Breast epithelium (tissue), 4 donors: ENCODE measurements at regions of chr10 and their contacts with region 1.

Region 1: DNA sequence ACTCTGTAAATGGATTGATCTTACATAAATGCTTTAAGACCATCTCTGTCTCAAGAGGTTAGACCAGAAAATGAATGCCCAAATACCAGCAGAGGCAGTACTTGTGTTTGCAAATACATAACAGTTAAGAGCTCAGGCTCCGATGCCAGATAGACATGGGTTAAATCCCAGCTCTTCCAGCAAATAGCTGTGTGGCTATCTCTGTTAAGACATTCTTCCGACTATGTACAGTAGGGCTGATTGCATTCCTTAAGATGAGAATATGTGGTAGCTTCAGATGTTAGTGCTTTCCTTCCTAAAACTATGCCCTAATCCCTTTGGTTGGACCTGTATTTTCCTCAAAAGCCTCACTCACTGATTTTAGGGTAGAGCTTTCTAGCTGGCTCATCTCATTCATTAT is 2.2 kb downstream of the IDE start:
- DNase-seq: no peak
- H3K4me3 ChIP-seq: no peak overlapping the region
- H3K27ac ChIP-seq: no peak overlapping the region
- H3K4me1 ChIP-seq: no peaks in the 10 kb centered on the region
- H3K27me3 ChIP-seq: no peaks in the 10 kb centered on the region
- CTCF ChIP-seq: no peak
- POLR2A ChIP-seq: no peak

Region 2: GRCh38 chr10:91409869-91410637 is 1161.6 kb before region 1 on chr10 and contains the start of gene HECTD2:
- intact Hi-C with region 1: no loop called
- DNase-seq: peak; percentile 60 to 72
- H3K4me3 ChIP-seq: peak within 1 kb of the TSS; percentile 81 to 95 (median 88)
- H3K27ac ChIP-seq: peak within 1 kb of the TSS; percentile 100
- H3K4me1 ChIP-seq: peaks cover 0 to 3% of the 10 kb centered on the region in 2 donors
- H3K27me3 ChIP-seq: no peaks in the 10 kb centered on the region
- CTCF ChIP-seq: peak in 2 of 3 donors; percentile 7 to 75
- POLR2A ChIP-seq: no peak
- total RNA-seq, gene HECTD2: 14.2 to 30.7 (median 19.0) TPM

Region 3: DNA sequence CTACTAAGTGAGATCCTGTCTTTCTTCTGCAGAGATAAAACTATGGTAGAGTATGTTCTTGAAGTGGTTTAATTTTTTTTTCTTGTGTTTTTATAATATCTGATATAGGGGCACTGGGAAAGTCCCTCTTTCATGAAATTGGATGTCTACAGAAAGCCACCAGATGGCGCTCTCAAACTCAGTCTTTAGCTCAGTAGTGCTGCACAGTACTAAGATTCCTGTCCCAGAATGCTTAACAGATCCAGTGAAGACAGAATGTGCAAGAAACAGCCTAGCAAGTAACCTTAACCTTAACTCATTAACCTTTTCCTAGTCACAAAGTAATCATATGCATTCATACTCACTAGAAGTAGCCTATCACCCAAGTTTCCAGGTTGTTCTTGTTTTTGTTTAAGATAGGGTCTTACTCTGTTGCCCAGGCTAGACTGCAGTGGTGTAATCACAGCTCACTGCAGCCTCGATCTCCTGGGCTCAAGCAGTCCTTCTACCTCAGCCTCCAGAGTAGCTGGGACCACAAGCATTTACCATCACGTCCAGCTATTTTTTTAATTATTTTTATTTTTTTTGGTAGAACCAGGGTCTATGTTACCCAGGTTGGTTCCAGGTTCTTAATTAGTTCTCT is 54.5 kb before region 1 on chr10:
- intact Hi-C with region 1: loop called (anchors 2 kb)
- DNase-seq: peak in 1 of 2 donors; percentile 32
- H3K4me3 ChIP-seq: no peak overlapping the region
- H3K27ac ChIP-seq: no peak overlapping the region
- H3K4me1 ChIP-seq: no peaks in the 10 kb centered on the region
- H3K27me3 ChIP-seq: no peaks in the 10 kb centered on the region
- CTCF ChIP-seq: peak; percentile 22 to 67 (median 66)
- POLR2A ChIP-seq: no peak